ENCODE measurements at regions of chr16 and their contacts with region 1.

Region 1: DNA sequence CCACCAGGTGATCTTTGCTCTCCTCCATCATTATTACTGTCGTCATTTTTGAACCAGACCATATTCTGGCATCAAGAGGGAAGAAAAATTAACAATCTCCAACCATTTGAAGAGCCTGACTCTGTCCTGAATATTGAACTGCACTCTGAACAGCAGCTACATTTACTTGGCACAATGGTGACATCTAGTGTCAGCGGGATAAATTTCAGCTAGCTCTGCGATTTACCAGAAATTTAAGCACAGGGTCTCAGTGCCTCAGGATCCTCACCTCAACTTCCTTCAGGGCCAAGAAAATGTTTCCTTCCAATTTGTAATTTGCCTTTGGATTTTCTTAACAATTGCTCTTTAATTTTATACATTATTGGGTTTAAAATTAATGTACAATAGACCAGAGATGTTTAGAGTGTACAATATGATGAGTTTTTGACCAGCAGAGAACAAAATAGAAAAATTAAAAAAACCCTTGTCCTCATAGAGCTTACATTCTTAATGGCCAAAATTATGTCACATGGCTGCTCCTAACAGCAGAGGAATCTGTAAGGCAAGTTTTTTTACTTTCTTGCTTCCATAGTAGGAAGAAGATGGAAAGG is 10.7 kb upstream of the ZNF19 start:
- DNase-seq: peak; percentile 44
- ATAC-seq: peak; percentile 91
- H3K4me3 Mint-ChIP-seq: no peak overlapping the region
- H3K27ac Mint-ChIP-seq: no peak overlapping the region
- H3K4me1 Mint-ChIP-seq: no peaks in the 10 kb centered on the region
- H3K27me3 Mint-ChIP-seq: no peaks in the 10 kb centered on the region; the same call in none of the 2 replicates
- CTCF ChIP-seq: peak; percentile 34

Region 2: GRCh38 chr16:71426072-71426879 is 73.6 kb before region 1 on chr16:
- CTCF ChIA-PET with region 1: interaction called, 14 read pairs
- POLR2A ChIA-PET with region 1: no interaction called
- DNase-seq: peak; percentile 94
- ATAC-seq: peak; percentile 96
- H3K4me3 Mint-ChIP-seq: peak overlapping the region; percentile 82
- H3K27ac Mint-ChIP-seq: peak overlapping the region; percentile 95
- H3K4me1 Mint-ChIP-seq: peaks cover 16% of the 10 kb centered on the region
- H3K27me3 Mint-ChIP-seq: peaks cover 53% of the 10 kb centered on the region
- CTCF ChIP-seq: no peak

Region 3: GRCh38 chr16:71461686-71462648 is 37.9 kb before region 1 on chr16 and contains the start of gene ZNF23:
- CTCF ChIA-PET with region 1: interaction called, 10 read pairs
- POLR2A ChIA-PET with region 1: no interaction called
- DNase-seq: peak; percentile 83
- ATAC-seq: peak; percentile 97
- H3K4me3 Mint-ChIP-seq: peak within 1 kb of the TSS; percentile 96
- H3K27ac Mint-ChIP-seq: peak within 1 kb of the TSS; percentile 89; the same call in 1 of the 2 replicates
- H3K4me1 Mint-ChIP-seq: peaks cover 17% of the 10 kb centered on the region
- H3K27me3 Mint-ChIP-seq: no peaks in the 10 kb centered on the region
- CTCF ChIP-seq: no peak
- total RNA-seq, gene ZNF23: 9.6 to 11.6 TPM (median 10.5 TPM) in 3 replicates

Region 4: GRCh38 chr16:71526111-71526631 is 26.3 kb after region 1 on chr16 and contains the start of gene CHST4:
- CTCF ChIA-PET with region 1: interaction called, 20 read pairs
- POLR2A ChIA-PET with region 1: interaction called, 3 read pairs
- DNase-seq: peak; percentile 75
- ATAC-seq: peak; percentile 89
- H3K4me3 Mint-ChIP-seq: peak within 1 kb of the TSS; percentile 74
- H3K27ac Mint-ChIP-seq: peak within 1 kb of the TSS; percentile 99
- H3K4me1 Mint-ChIP-seq: peaks cover 45% of the 10 kb centered on the region
- H3K27me3 Mint-ChIP-seq: no peaks in the 10 kb centered on the region; the same call in 1 of the 2 replicates
- CTCF ChIP-seq: no peak
- total RNA-seq, gene CHST4: 9.9 to 12.8 TPM (median 12.0 TPM) in 3 replicates

Region 5: GRCh38 chr16:71537643-71538042 is 37.8 kb after region 1 on chr16:
- CTCF ChIA-PET with region 1: interaction called, 15 read pairs
- POLR2A ChIA-PET with region 1: no interaction called
- DNase-seq: peak; percentile 66
- ATAC-seq: peak; percentile 87
- H3K4me3 Mint-ChIP-seq: no peak overlapping the region
- H3K27ac Mint-ChIP-seq: no peak overlapping the region
- H3K4me1 Mint-ChIP-seq: peaks cover 4% of the 10 kb centered on the region; the same call in 1 of the 2 replicates
- H3K27me3 Mint-ChIP-seq: no peaks in the 10 kb centered on the region
- CTCF ChIP-seq: peak; percentile 51; the same call in 1 of the 2 replicates

Measured in WTC11 (cell line).